Mammary epithelial cell (primary cell): ENCODE measurements at regions of chr17 and their contacts with region 1.

Region 1: GRCh38 chr17:40909351-40909750 is 24.3 kb upstream of the KRT20 start:
- DNase-seq: peak; percentile 96
- H3K4me3 ChIP-seq: no peak overlapping the region
- H3K27ac ChIP-seq: peak overlapping the region; percentile 98
- H3K4me1 ChIP-seq: peaks cover 47% of the 10 kb centered on the region
- H3K27me3 ChIP-seq: no peaks in the 10 kb centered on the region
- CTCF ChIP-seq: peak; percentile 76 to 84

Region 2: DNA sequence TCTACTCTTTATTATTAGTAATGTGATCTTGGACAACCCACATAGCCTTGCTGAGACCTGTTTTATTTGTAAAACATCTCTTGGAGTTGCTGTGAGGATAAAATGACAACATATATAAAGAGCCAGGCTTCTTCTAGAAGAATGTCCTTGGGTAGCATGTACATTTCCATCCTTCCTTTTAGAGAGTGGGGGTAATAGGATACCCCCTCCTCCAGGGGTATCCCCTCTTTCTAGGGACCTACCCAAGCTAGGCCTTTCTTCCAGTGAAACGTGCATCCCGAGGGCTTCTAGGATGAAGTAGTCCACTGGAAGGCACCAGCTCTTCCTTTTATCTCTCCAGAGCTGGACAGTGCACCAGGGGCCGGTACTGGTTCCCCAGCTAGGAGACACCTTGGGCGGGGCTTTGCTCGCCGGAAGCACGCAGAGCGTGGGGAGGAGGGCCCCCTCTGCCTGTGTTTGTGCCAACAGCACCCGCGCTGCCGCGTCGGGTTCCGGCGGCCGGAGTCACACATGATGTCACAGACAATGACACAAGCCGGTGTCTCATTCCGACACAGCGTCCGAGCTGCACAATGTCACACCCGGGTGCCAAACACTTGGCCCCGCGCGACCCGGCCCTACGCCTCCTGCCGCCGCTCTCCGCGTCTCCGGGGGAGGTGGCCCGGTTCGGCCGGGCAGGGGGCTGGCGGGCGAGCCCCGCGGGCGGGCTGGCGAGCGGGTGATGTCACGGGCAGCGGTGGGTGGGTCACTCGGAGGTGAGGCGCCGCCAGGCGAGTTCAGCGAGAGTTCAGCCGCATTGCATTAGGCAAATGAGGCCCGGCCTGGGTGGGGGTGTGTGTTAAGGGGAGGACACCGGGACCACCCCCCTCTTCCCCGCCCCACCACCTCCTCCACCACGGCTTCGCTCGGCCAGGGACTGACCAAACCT is 568.2 kb before region 1 on chr17:
- CTCF ChIA-PET with region 1: no interaction called
- dilution Hi-C with region 1: no loop called
- in situ Hi-C with region 1: no loop called
- intact Hi-C with region 1: no loop called
- DNase-seq: peak; percentile 52
- H3K4me3 ChIP-seq: peak overlapping the region in 1 of 3 experiments; percentile 18
- H3K27ac ChIP-seq: no peak overlapping the region
- H3K4me1 ChIP-seq: peaks cover 52% of the 10 kb centered on the region
- H3K27me3 ChIP-seq: no peaks in the 10 kb centered on the region
- CTCF ChIP-seq: no peak

Region 3: GRCh38 chr17:40803617-40804082 is 105.7 kb before region 1 on chr17:
- CTCF ChIA-PET with region 1: no interaction called
- dilution Hi-C with region 1: no loop called
- in situ Hi-C with region 1: loop called in 1 of 2 experiments (anchors 5 kb)
- intact Hi-C with region 1: loop called (anchors 1 kb)
- DNase-seq: peak; percentile 65
- H3K4me3 ChIP-seq: no peak overlapping the region
- H3K27ac ChIP-seq: no peak overlapping the region
- H3K4me1 ChIP-seq: peaks cover 4% of the 10 kb centered on the region
- H3K27me3 ChIP-seq: no peaks in the 10 kb centered on the region
- CTCF ChIP-seq: peak; percentile 89 to 93

Region 4: GRCh38 chr17:40963838-40964237 is 54.5 kb after region 1 on chr17:
- CTCF ChIA-PET with region 1: no interaction called
- dilution Hi-C with region 1: no loop called
- in situ Hi-C with region 1: no loop called
- intact Hi-C with region 1: loop called (anchors 2 kb)
- DNase-seq: peak; percentile 83
- H3K4me3 ChIP-seq: no peak overlapping the region
- H3K27ac ChIP-seq: peak overlapping the region; percentile 54
- H3K4me1 ChIP-seq: peaks cover 8% of the 10 kb centered on the region
- H3K27me3 ChIP-seq: no peaks in the 10 kb centered on the region
- CTCF ChIP-seq: peak; percentile 76 to 88

Region 5: DNA sequence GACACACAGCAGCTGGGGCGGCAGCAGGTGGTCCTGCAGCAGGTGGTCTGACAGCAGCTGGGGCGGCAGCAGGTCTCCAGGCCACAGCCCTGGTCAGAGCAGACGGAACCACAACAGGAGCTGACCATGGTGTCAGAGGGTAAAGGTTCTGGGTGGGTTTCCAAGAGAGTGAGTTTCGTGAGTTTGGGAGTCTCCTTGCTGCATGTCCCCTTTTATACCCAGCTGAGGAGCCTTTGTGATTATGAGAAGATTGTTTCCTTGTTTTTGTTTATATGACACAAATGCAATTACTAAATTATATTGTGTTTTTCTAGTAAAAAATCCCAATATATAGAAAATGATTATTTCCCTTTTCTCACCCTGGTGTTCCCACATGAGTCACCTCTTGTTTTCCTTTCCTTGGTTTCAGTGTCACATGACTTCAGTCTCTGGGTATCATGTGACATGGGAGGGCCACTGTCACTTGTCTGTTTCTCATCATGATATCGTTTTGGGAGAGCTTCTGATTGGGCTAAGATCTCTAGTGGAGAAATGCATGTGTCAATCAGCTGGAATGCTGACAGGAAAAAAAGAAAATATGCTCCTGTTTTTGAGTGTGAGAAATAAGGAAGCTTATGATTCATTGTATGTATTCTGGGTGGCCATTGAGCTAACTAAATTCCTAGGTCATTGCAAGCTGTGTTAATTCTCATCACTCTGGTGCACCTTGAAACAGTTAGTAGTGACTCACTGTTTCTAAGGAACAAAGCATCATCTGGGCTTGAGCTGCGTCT is 231.2 kb after region 1 on chr17 and contains the start of gene KRTAP4-6:
- CTCF ChIA-PET with region 1: no interaction called
- dilution Hi-C with region 1: no loop called
- in situ Hi-C with region 1: no loop called
- intact Hi-C with region 1: loop called (anchors 2 kb)
- DNase-seq: peak; percentile 93
- H3K4me3 ChIP-seq: no peak within 1 kb of the TSS
- H3K27ac ChIP-seq: peak within 1 kb of the TSS; percentile 60
- H3K4me1 ChIP-seq: peaks cover 10% of the 10 kb centered on the region
- H3K27me3 ChIP-seq: no peaks in the 10 kb centered on the region
- CTCF ChIP-seq: no peak
- total RNA-seq, gene KRTAP4-6: not detected

Region 6: DNA sequence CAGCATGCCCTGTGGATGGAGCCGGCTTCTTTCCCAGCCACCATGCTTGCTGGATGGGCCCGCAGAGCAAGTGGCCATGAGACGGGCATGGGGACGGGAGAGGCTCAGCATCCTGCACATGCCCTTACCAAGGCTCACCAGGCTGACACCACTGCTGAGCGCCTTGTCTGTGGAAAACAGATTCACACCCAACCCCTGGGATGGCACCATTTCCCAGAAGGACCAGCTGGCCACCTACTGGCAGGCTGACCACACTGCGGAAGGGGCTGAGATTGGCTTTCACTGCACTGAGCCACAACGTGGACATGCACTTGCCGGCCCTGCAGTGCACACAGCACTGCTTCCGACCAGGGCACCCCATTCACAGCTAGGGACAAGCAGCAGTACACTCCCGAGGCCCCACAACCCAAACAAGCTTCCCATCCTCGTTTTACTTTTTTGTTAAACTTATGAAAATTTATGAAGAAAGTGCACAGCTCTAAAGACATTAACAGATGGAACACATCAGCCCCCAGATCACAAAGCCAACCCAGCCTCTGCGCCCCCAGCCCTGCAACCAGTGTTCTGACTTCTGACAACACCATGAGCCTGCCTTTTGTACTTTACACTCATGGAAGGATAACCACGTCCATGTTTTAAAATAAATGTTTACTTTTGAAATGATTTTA is 420.1 kb after region 1 on chr17:
- CTCF ChIA-PET with region 1: interaction called, 15 read pairs
- dilution Hi-C with region 1: no loop called
- in situ Hi-C with region 1: loop called in 1 of 2 experiments (anchors 5 kb)
- intact Hi-C with region 1: loop called (anchors 1 kb)
- DNase-seq: peak; percentile 52
- H3K4me3 ChIP-seq: no peak overlapping the region
- H3K27ac ChIP-seq: no peak overlapping the region
- H3K4me1 ChIP-seq: peaks cover under 1% of the 10 kb centered on the region
- H3K27me3 ChIP-seq: no peaks in the 10 kb centered on the region
- CTCF ChIP-seq: peak; percentile 88 to 96

Region 7: DNA sequence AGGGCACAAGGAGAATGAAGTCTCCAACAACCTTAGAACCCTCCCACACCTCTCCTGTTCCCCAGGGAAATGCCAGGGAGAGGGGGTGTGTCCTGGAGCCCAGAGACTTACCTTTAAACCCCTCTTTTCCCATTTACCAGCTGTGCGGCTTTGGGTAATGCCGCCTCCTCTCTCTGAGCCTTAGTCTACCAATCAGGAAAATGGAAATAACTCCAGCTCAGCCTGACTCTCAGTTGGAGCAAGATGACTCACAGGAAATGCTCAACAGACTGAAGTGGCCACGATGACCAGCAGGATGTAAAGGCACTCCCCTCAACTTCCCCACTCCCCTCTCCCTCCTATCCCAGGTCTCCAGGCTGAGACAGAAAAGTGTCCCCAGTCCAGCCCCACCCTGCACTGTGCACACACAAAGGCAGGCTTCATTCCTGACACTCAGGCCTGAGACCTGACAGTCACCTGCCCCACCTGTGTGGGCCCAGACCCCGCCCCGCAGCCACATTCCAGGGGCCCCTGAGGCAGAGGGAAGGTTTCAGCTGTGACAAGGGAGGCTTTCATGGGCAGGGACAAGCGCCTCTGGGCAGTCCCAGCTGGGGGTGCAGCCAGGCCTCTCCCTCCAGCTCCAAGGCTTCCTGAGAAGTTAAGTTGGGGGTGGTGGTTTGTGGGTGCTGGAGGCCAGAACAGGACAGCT is 612.4 kb after region 1 on chr17:
- CTCF ChIA-PET with region 1: no interaction called
- dilution Hi-C with region 1: no loop called
- in situ Hi-C with region 1: no loop called
- intact Hi-C with region 1: loop called (anchors 1 kb)
- DNase-seq: peak; percentile 99
- H3K4me3 ChIP-seq: peak overlapping the region in 1 of 3 experiments; percentile 19
- H3K27ac ChIP-seq: peak overlapping the region; percentile 94
- H3K4me1 ChIP-seq: peaks cover 62% of the 10 kb centered on the region
- H3K27me3 ChIP-seq: no peaks in the 10 kb centered on the region
- CTCF ChIP-seq: no peak

Region 8: GRCh38 chr17:41665566-41666236 is 756.4 kb after region 1 on chr17:
- CTCF ChIA-PET with region 1: interaction called, 3 read pairs
- dilution Hi-C with region 1: no loop called
- in situ Hi-C with region 1: loop called (anchors 5 kb)
- intact Hi-C with region 1: loop called (anchors 1 kb)
- DNase-seq: peak; percentile 83
- H3K4me3 ChIP-seq: peak overlapping the region in 2 of 3 experiments; percentile 34 to 37
- H3K27ac ChIP-seq: peak overlapping the region; percentile 68
- H3K4me1 ChIP-seq: peaks cover 47% of the 10 kb centered on the region
- H3K27me3 ChIP-seq: no peaks in the 10 kb centered on the region
- CTCF ChIP-seq: peak; percentile 87 to 92